CD4-positive, alpha-beta T cell (primary cell): ENCODE measurements at regions of chr10 and their contacts with region 1.

Region 1: DNA sequence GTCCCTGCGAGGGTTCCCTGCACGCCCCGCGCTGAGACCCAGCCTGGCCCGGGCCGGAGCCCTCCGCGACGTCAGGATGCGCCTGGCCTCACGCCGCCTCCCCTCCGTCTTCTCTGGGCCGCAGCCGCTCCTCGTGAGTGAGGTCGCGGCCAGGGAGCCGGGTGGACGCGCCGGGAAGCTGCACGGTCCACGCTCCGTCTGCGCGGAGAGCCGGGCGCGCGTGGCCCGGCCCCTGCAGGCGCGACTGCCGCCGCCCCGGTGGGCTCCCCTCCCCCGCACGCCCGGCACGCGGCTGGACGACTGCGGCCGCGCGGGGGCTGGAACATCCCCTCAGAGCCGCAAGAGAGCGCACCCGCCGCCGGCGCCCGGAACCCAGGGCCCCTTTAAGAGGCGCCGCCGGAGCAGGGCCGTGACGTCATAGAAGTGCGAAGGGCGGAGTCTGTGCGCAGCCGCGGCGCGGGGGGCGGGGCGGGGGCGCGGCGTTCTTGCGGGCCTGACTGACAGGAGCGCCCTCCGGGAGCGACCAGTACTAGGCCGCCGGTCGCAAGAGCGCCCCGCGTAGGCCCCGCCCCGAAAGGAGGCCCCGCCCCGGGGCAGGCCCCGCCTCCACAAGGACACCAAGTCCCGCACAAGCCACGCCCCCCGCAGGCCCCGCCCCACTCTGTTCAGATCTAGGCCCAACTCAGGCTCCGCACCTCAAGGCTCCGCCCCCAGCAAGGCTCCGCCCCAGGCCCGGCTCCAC is 445 bp upstream of the INPP5A start:
- DNase-seq: peak; percentile 99 to 100 (median 100)
- ATAC-seq: peak; percentile 84
- H3K4me3 ChIP-seq: peak overlapping the region; percentile 41
- H3K4me3 Mint-ChIP-seq: peak overlapping the region; percentile 92
- H3K27ac ChIP-seq: peak overlapping the region in 1 of 2 donors; percentile 43
- H3K27ac Mint-ChIP-seq: peak overlapping the region; percentile 81
- H3K4me1 ChIP-seq: peaks cover 56% of the 10 kb centered on the region
- H3K4me1 Mint-ChIP-seq: peaks cover 46% of the 10 kb centered on the region
- H3K27me3 ChIP-seq: no peaks in the 10 kb centered on the region
- H3K27me3 Mint-ChIP-seq: no peaks in the 10 kb centered on the region
- CTCF ChIP-seq: no peak

Region 2: GRCh38 chr10:131981429-131982184 is 555.5 kb before region 1 on chr10 and contains the start of gene BNIP3:
- CTCF ChIA-PET with region 1: no interaction called
- POLR2A ChIA-PET with region 1: no interaction called
- intact Hi-C with region 1: loop called in 1 of 2 experiments (anchors 5 kb)
- DNase-seq: peak; percentile 87 to 98 (median 94)
- ATAC-seq: peak; percentile 87
- H3K4me3 ChIP-seq: peak within 1 kb of the TSS; percentile 80
- H3K4me3 Mint-ChIP-seq: peak within 1 kb of the TSS; percentile 90
- H3K27ac ChIP-seq: peak within 1 kb of the TSS; percentile 16 to 55
- H3K27ac Mint-ChIP-seq: peak within 1 kb of the TSS; percentile 81
- H3K4me1 ChIP-seq: peaks cover 53% of the 10 kb centered on the region
- H3K4me1 Mint-ChIP-seq: peaks cover 47% of the 10 kb centered on the region
- H3K27me3 ChIP-seq: no peaks in the 10 kb centered on the region
- H3K27me3 Mint-ChIP-seq: no peaks in the 10 kb centered on the region
- CTCF ChIP-seq: no peak
- total RNA-seq, gene BNIP3: 21.0 to 23.6 TPM

Region 3: GRCh38 chr10:132331526-132332432 is 205.4 kb before region 1 on chr10 and contains the start of gene LRRC27:
- CTCF ChIA-PET with region 1: no interaction called
- POLR2A ChIA-PET with region 1: no interaction called
- intact Hi-C with region 1: loop called (anchors 5 kb)
- DNase-seq: peak; percentile 99 to 100 (median 100)
- ATAC-seq: peak; percentile 86
- H3K4me3 ChIP-seq: peak within 1 kb of the TSS; percentile 86
- H3K4me3 Mint-ChIP-seq: peak within 1 kb of the TSS; percentile 95
- H3K27ac ChIP-seq: peak within 1 kb of the TSS; percentile 62 to 78
- H3K27ac Mint-ChIP-seq: peak within 1 kb of the TSS; percentile 84
- H3K4me1 ChIP-seq: peaks cover 46% of the 10 kb centered on the region
- H3K4me1 Mint-ChIP-seq: peaks cover 75% of the 10 kb centered on the region
- H3K27me3 ChIP-seq: no peaks in the 10 kb centered on the region
- H3K27me3 Mint-ChIP-seq: no peaks in the 10 kb centered on the region
- CTCF ChIP-seq: no peak
- total RNA-seq, gene LRRC27: 2.4 to 2.8 TPM

Region 4: DNA sequence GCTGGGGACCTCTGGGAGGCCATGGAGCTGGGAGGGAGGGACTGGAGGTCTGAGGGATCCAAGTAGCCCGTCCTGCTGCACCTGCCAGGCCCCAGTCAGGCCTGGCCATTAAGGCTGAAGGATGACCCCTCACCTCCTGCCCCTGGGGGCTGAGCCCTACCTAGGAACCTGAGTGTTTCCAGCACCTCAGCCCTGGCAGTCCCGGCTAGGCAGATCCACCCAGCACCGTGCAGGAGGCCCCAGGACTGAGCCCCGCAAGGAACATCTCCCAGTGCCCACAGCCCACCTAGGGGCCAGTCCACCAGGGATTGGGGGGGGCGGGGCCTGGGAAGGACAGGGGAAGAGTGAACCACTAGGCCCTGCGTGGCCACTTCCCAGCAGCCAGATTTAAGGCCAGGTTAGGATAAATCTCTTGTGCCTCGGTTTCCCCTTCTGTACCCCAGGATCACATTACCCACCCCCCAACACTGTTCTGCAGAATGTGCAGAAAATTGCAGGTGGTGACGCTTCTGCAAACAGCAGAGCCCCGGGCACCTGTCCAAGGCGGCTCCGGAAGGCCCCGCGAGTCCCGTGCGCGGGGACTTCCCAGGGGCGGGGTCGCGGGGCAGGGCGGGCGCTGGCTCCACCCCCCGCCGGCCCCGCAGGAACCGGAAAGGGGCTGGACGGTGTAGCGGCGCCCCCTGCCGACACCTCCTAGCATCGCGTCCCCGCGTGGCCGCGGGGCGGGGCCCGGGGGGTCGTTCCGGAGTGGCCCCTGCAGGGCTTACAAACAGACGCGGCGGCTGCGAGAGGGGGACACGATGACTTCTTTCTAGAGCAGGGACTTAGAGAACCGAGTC is 84.3 kb before region 1 on chr10:
- CTCF ChIA-PET with region 1: no interaction called
- POLR2A ChIA-PET with region 1: interaction called, 4 read pairs
- intact Hi-C with region 1: loop called (anchors 2 to 5 kb)
- DNase-seq: peak; percentile 87 to 97 (median 92)
- ATAC-seq: peak; percentile 93
- H3K4me3 ChIP-seq: peak overlapping the region; percentile 33
- H3K4me3 Mint-ChIP-seq: peak overlapping the region; percentile 42
- H3K27ac ChIP-seq: peak overlapping the region; percentile 79 to 82
- H3K27ac Mint-ChIP-seq: peak overlapping the region; percentile 89
- H3K4me1 ChIP-seq: peaks cover 39% of the 10 kb centered on the region
- H3K4me1 Mint-ChIP-seq: peaks cover 34% of the 10 kb centered on the region
- H3K27me3 ChIP-seq: no peaks in the 10 kb centered on the region
- H3K27me3 Mint-ChIP-seq: no peaks in the 10 kb centered on the region
- CTCF ChIP-seq: peak; percentile 92

Region 5: GRCh38 chr10:132497023-132497680 is 40.0 kb before region 1 on chr10:
- CTCF ChIA-PET with region 1: no interaction called
- POLR2A ChIA-PET with region 1: no interaction called
- intact Hi-C with region 1: no loop called
- DNase-seq: no peak
- ATAC-seq: no peak
- H3K4me3 ChIP-seq: no peak overlapping the region
- H3K4me3 Mint-ChIP-seq: no peak overlapping the region
- H3K27ac ChIP-seq: no peak overlapping the region
- H3K27ac Mint-ChIP-seq: no peak overlapping the region
- H3K4me1 ChIP-seq: no peaks in the 10 kb centered on the region
- H3K4me1 Mint-ChIP-seq: no peaks in the 10 kb centered on the region
- H3K27me3 ChIP-seq: peaks cover 0 to 6% of the 10 kb centered on the region in 2 experiments
- H3K27me3 Mint-ChIP-seq: no peaks in the 10 kb centered on the region
- CTCF ChIP-seq: no peak

Region 6: DNA sequence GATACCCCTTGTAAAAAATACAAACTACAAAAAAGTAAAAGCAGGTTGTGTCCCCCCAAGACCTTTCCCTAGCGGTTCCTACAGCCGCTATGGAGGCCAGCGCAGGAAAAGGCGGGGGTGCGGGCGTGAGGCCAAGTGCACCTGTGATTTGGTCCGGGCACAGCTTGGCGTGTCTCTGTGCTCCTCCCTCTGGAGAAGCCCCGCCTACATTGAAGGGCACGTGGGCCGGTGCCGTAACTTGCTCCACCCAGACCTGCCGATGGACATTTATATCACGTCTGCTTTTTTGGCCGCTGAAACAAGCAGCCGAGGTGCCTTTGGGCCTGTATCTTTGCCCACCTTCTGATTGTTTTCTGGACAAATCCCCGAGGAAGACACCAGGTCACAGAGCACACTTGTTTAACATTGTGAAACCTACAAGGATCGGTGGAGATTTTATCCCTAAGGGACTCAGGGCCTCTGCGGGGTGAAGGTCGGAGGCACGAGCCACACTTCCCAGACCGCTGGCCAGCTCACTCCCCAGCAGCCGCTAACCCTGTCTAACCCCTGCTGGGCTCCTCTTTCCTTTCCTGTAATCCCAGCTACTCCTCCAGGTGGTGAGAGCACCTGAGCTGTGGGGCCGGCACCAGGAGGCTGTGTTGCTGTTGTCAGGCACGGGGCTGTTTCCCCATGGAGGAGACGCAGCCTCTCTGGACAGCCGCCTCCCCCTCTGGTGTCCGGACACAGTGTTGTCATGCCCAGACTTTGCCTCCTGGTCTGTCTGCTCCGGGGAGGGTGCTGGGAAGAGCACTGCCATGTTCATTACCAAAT is 18.4 kb before region 1 on chr10:
- CTCF ChIA-PET with region 1: no interaction called
- POLR2A ChIA-PET with region 1: no interaction called
- intact Hi-C with region 1: no loop called
- DNase-seq: no peak
- ATAC-seq: no peak
- H3K4me3 ChIP-seq: no peak overlapping the region
- H3K4me3 Mint-ChIP-seq: no peak overlapping the region
- H3K27ac ChIP-seq: no peak overlapping the region
- H3K27ac Mint-ChIP-seq: no peak overlapping the region
- H3K4me1 ChIP-seq: no peaks in the 10 kb centered on the region
- H3K4me1 Mint-ChIP-seq: no peaks in the 10 kb centered on the region
- H3K27me3 ChIP-seq: peaks cover 0 to 6% of the 10 kb centered on the region in 2 experiments
- H3K27me3 Mint-ChIP-seq: peaks cover 3% of the 10 kb centered on the region
- CTCF ChIP-seq: no peak

Region 7: GRCh38 chr10:132551093-132551807 is 14.1 kb after region 1 on chr10:
- CTCF ChIA-PET with region 1: interaction called, 4 read pairs
- POLR2A ChIA-PET with region 1: interaction called, 11 read pairs
- intact Hi-C with region 1: loop called (anchors 1 to 2 kb)
- DNase-seq: peak in 6 of 14 experiments; percentile 26 to 60 (median 42)
- ATAC-seq: peak; percentile 43
- H3K4me3 ChIP-seq: peak overlapping the region; percentile 27
- H3K4me3 Mint-ChIP-seq: peak overlapping the region; percentile 87
- H3K27ac ChIP-seq: no peak overlapping the region
- H3K27ac Mint-ChIP-seq: peak overlapping the region; percentile 80
- H3K4me1 ChIP-seq: peaks cover 67% of the 10 kb centered on the region
- H3K4me1 Mint-ChIP-seq: peaks cover 35% of the 10 kb centered on the region
- H3K27me3 ChIP-seq: no peaks in the 10 kb centered on the region
- H3K27me3 Mint-ChIP-seq: no peaks in the 10 kb centered on the region
- CTCF ChIP-seq: peak; percentile 37

Region 8: DNA sequence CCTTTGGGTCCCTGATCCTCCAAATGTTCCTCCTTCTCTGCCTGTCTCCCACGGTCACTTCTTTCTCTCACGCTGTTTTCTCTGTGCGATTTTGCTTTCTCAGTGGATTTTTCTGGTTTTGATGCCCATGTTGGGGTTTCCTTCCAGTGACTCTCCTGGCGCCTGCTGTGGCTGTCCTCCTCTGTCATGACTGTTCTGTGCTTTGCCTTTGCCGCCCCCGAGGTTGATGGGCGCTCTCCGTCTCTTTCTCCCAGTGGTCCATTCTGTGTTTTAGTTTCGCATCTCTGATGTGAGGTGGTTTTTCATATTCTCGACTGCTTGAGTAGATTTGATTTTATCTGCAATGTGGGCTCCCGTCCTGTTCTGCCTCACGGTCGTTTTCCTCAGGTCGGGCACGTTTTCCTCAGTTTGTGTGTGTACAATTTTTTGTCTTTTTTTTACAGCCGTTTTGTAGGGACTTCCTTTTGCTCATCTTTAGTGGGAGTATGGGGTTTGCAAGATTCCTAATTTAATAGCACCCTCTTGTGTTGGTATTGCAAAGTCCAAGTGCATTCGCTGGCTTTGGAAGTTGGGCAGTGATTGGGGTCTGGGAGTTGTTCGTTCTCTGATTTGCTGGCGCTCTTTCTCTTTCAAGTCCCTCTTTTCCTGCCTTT is 100.5 kb after region 1 on chr10:
- CTCF ChIA-PET with region 1: no interaction called
- POLR2A ChIA-PET with region 1: interaction called, 3 read pairs
- intact Hi-C with region 1: loop called (anchors 5 kb)
- DNase-seq: peak in 5 of 14 experiments; percentile 25 to 73 (median 66)
- ATAC-seq: peak; percentile 79
- H3K4me3 ChIP-seq: no peak overlapping the region
- H3K4me3 Mint-ChIP-seq: no peak overlapping the region
- H3K27ac ChIP-seq: no peak overlapping the region
- H3K27ac Mint-ChIP-seq: no peak overlapping the region
- H3K4me1 ChIP-seq: peaks cover 11% of the 10 kb centered on the region
- H3K4me1 Mint-ChIP-seq: peaks cover 30% of the 10 kb centered on the region
- H3K27me3 ChIP-seq: no peaks in the 10 kb centered on the region
- H3K27me3 Mint-ChIP-seq: no peaks in the 10 kb centered on the region
- CTCF ChIP-seq: peak; percentile 82

Region 9: DNA sequence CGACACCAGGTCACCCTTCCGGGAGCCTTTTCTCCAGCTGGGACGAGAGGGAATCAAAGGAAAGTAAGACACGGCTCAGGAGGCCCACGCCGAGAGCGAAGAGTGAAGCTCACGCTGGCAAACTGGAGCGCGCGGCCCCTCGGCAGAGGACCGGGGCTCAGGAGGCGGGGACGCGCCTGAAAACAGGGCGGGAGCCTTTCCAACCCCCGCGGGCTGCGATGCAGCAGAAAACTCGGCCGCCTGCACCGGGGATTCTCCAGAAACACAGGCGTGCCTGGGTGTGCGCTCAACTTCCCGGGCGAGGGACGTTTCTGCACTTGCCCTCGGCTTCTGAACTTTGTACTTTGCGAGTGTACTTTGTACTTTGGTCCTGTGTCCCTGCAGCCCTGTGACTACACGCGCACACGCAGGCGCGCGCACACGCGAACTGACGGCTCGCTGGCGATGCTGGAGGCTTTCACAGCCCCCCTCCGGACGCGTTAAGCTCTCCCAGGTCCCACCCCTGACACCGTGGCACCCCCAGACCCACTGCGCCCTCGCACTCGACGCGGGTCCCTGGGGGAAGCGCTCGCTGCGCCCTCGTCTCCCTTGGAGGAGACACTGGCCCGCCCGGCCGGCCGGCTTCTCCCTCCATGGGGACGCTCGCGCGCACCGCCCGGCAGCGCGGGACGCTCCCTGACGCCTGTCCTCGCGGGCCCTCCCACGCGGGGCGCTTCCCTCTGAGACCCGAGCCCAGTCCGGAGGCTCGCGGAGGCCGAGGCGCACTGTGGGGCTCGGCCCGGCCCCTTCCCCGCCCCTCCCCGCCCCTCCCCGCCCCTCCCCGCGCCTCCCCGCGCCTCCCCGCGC is 841.3 kb after region 1 on chr10:
- CTCF ChIA-PET with region 1: no interaction called
- POLR2A ChIA-PET with region 1: no interaction called
- intact Hi-C with region 1: loop called in 1 of 2 experiments (anchors 5 kb)
- DNase-seq: peak; percentile 39 to 78 (median 53)
- ATAC-seq: peak; percentile 58
- H3K4me3 ChIP-seq: peak overlapping the region; percentile 93
- H3K4me3 Mint-ChIP-seq: peak overlapping the region; percentile 87
- H3K27ac ChIP-seq: peak overlapping the region in 1 of 2 donors; percentile 40
- H3K27ac Mint-ChIP-seq: peak overlapping the region; percentile 24
- H3K4me1 ChIP-seq: peaks cover 34% of the 10 kb centered on the region
- H3K4me1 Mint-ChIP-seq: peaks cover 4% of the 10 kb centered on the region
- H3K27me3 ChIP-seq: no peaks in the 10 kb centered on the region
- H3K27me3 Mint-ChIP-seq: no peaks in the 10 kb centered on the region
- CTCF ChIP-seq: no peak